ENCODE measurements at regions of chr3 and their contacts with region 1.

Region 1: GRCh38 chr3:161291195-161291912 is 70.2 kb downstream of the NMD3 start:
- DNase-seq: peak; percentile 79 to 91
- H3K4me3 ChIP-seq: no peak overlapping the region
- H3K27ac ChIP-seq: peak overlapping the region; percentile 7; the same call in 1 of the 2 replicates
- H3K4me1 ChIP-seq: peaks cover 24% of the 10 kb centered on the region
- H3K27me3 ChIP-seq: no peaks in the 10 kb centered on the region
- CTCF ChIP-seq: no peak

Region 2: GRCh38 chr3:161315996-161316685 is 24.8 kb after region 1 on chr3:
- CTCF ChIA-PET with region 1: no interaction called
- POLR2A ChIA-PET with region 1: interaction called, 7 read pairs
- intact Hi-C with region 1: loop called (anchors 1 kb)
- DNase-seq: peak; percentile 82 to 88
- H3K4me3 ChIP-seq: no peak overlapping the region
- H3K27ac ChIP-seq: peak overlapping the region; percentile 64
- H3K4me1 ChIP-seq: peaks cover 32% of the 10 kb centered on the region
- H3K27me3 ChIP-seq: no peaks in the 10 kb centered on the region
- CTCF ChIP-seq: no peak

Region 3: GRCh38 chr3:161349529-161350278 is 58.4 kb after region 1 on chr3:
- CTCF ChIA-PET with region 1: no interaction called
- POLR2A ChIA-PET with region 1: no interaction called
- intact Hi-C with region 1: loop called (anchors 1 kb)
- DNase-seq: peak; percentile 68 to 97
- H3K4me3 ChIP-seq: no peak overlapping the region
- H3K27ac ChIP-seq: peak overlapping the region; percentile 62
- H3K4me1 ChIP-seq: peaks cover 39% of the 10 kb centered on the region
- H3K27me3 ChIP-seq: no peaks in the 10 kb centered on the region
- CTCF ChIP-seq: no peak

Region 4: DNA sequence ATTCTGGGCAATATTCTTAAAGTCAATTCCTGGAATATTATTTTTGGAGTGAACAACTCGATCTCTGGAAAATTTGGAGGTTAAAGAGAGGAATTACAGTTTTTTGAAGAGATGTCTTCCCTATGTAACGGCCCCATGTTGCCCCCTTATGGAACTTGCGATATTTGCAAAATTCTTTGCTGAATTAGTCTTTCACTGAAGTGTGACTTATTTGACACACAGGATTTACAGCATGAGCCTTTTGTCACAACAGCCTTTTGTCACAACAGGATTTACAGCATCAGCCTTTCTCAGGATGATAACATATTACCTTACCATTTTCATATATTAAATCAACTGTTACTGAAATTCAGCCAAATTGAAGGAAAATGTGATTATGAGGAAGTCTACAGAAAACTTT is 117.7 kb after region 1 on chr3:
- CTCF ChIA-PET with region 1: no interaction called
- POLR2A ChIA-PET with region 1: interaction called, 3 read pairs
- intact Hi-C with region 1: loop called (anchors 1 kb)
- DNase-seq: peak; percentile 37 to 56
- H3K4me3 ChIP-seq: no peak overlapping the region
- H3K27ac ChIP-seq: no peak overlapping the region
- H3K4me1 ChIP-seq: peaks cover 21% of the 10 kb centered on the region
- H3K27me3 ChIP-seq: no peaks in the 10 kb centered on the region
- CTCF ChIP-seq: peak; percentile 74

Measured in PC-9 (cell line).